ENCODE measurements at regions of chr7 and their contacts with region 1.

Region 1: DNA sequence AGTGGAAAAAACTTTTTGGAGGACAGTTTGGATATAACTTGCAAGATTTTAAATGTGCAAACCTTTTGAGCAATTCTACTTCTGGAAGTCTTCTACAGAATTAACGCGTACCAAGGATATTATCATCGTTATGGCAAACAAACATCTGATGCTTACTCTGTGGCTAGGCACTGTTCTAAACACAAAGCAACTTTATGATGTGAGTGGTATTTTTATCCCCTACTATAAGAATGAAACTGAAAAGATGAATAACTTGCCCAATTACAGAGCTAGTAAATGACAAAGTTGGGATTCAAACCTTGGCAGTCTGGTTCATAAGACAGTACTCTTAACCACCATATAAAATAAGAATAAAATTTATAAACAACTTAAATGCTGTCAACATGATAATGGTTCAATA is 15.8 kb downstream of the ASZ1 start:
- DNase-seq: no peak
- ATAC-seq: peak; percentile 93
- H3K4me3 ChIP-seq: no peak overlapping the region
- H3K27ac ChIP-seq: no peak overlapping the region
- H3K4me1 ChIP-seq: no peaks in the 10 kb centered on the region
- H3K27me3 ChIP-seq: no peaks in the 10 kb centered on the region
- CTCF ChIP-seq: no peak
- EP300 ChIP-seq: peak in 1 of 2 experiments; percentile 67; a peak in 1 of 4 replicates
- POLR2A ChIP-seq: no peak
- RAD21 ChIP-seq: no peak

Region 2: GRCh38 chr7:117424090-117424829 is 12.7 kb after region 1 on chr7:
- CTCF ChIA-PET with region 1: interaction called, 4 read pairs
- POLR2A ChIA-PET with region 1: interaction called, 3 read pairs
- RAD21 ChIA-PET with region 1: interaction called, 13 read pairs
- SMC1A ChIA-PET with region 1: interaction called, 8 read pairs
- in situ Hi-C with region 1: no loop called
- intact Hi-C with region 1: no loop called
- DNase-seq: peak; percentile 24
- ATAC-seq: peak; percentile 88
- H3K4me3 ChIP-seq: no peak overlapping the region
- H3K27ac ChIP-seq: peak overlapping the region; percentile 27; the same call in 1 of the 2 replicates
- H3K4me1 ChIP-seq: no peaks in the 10 kb centered on the region
- H3K27me3 ChIP-seq: no peaks in the 10 kb centered on the region
- CTCF ChIP-seq: no peak
- EP300 ChIP-seq: peak; percentile 72 to 80; a peak in 2 of 4 replicates
- POLR2A ChIP-seq: no peak
- RAD21 ChIP-seq: no peak

Region 3: GRCh38 chr7:117435475-117436043 is 24.0 kb after region 1 on chr7:
- CTCF ChIA-PET with region 1: no interaction called
- POLR2A ChIA-PET with region 1: no interaction called
- RAD21 ChIA-PET with region 1: interaction called, 10 read pairs
- SMC1A ChIA-PET with region 1: interaction called, 7 read pairs
- in situ Hi-C with region 1: no loop called
- intact Hi-C with region 1: no loop called
- DNase-seq: peak; percentile 73
- ATAC-seq: peak; percentile 99
- H3K4me3 ChIP-seq: no peak overlapping the region
- H3K27ac ChIP-seq: no peak overlapping the region; the same call in 1 of the 2 replicates
- H3K4me1 ChIP-seq: peaks cover 9% of the 10 kb centered on the region
- H3K27me3 ChIP-seq: no peaks in the 10 kb centered on the region
- CTCF ChIP-seq: no peak
- EP300 ChIP-seq: peak; percentile 73 to 81; a peak in 3 of 4 replicates
- POLR2A ChIP-seq: no peak
- RAD21 ChIP-seq: no peak

Measured in GM12878 (cell line).